PC-3 (cell line): ENCODE measurements at regions of chr21 and their contacts with region 1.

Region 1: GRCh38 chr21:45098867-45099266 is 24.5 kb downstream of the ADARB1 start:
- DNase-seq: peak; percentile 52
- ATAC-seq: peak; percentile 48
- H3K4me3 ChIP-seq: no peak overlapping the region
- H3K27ac ChIP-seq: no peak overlapping the region
- H3K4me1 ChIP-seq: peaks cover 16% of the 10 kb centered on the region
- H3K27me3 ChIP-seq: no peaks in the 10 kb centered on the region
- CTCF ChIP-seq: peak; percentile 80

Region 2: DNA sequence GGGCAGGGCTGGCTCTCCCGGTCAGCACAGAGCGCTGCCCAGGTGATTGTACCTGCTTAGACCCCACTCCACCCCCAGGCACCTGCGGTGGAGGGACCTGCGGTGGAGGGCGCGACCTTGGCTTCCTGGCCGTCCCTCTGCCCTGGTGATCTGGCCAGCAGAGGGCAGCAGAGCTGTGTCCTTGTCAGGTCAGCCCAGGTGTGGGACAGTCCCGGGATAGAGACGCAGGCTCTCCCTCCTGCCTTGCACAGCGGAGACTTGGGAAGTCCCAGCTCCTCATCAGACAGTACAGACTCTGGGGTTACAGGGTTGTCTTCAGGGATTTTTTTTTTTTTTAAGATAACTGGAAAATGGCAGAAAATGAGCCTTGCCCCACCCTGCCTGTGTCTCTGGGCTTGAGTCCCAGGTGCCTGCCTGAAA is 149.1 kb before region 1 on chr21:
- CTCF ChIA-PET with region 1: interaction called, 10 read pairs
- POLR2A ChIA-PET with region 1: no interaction called
- intact Hi-C with region 1: no loop called
- DNase-seq: peak; percentile 81
- ATAC-seq: peak; percentile 84
- H3K4me3 ChIP-seq: no peak overlapping the region
- H3K27ac ChIP-seq: no peak overlapping the region
- H3K4me1 ChIP-seq: peaks cover 13% of the 10 kb centered on the region; the same call in 1 of the 2 replicates
- H3K27me3 ChIP-seq: no peaks in the 10 kb centered on the region
- CTCF ChIP-seq: peak; percentile 96

Region 3: GRCh38 chr21:45074048-45074817 is 24.6 kb before region 1 on chr21 and contains the start of gene ADARB1:
- CTCF ChIA-PET with region 1: interaction called, 11 read pairs
- POLR2A ChIA-PET with region 1: interaction called, 4 read pairs
- intact Hi-C with region 1: loop called (anchors 2 kb)
- DNase-seq: peak; percentile 62
- ATAC-seq: peak; percentile 46
- H3K4me3 ChIP-seq: peak within 1 kb of the TSS; percentile 88
- H3K27ac ChIP-seq: peak within 1 kb of the TSS; percentile 41
- H3K4me1 ChIP-seq: peaks cover 21% of the 10 kb centered on the region; the same call in 1 of the 2 replicates
- H3K27me3 ChIP-seq: no peaks in the 10 kb centered on the region
- CTCF ChIP-seq: no peak
- total RNA-seq, gene ADARB1: 14.1 and 21.0 TPM in 2 replicates

Region 4: DNA sequence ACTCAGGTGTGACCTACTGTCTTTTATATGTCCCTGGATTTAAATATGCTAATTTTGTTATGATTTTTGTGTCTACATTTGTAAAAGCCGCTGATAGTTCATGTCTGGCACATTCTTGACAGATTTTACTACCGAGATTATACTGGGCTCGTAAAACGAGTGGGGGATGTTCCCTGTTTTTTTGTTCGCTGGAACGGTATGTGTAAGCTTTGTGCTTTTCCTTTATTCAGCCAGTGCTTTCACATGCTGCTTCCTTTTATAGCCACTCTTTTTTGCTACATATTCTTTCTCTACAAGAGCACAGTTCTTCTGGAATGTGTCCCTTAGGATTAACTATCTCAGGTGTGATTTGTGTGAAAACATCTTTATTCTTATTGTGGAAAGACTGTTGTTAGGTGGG is 22.1 kb after region 1 on chr21:
- CTCF ChIA-PET with region 1: interaction called, 10 read pairs
- POLR2A ChIA-PET with region 1: interaction called, 5 read pairs
- intact Hi-C with region 1: loop called (anchors 2 kb)
- DNase-seq: peak; percentile 48
- ATAC-seq: peak; percentile 84
- H3K4me3 ChIP-seq: peak overlapping the region; percentile 66
- H3K27ac ChIP-seq: no peak overlapping the region
- H3K4me1 ChIP-seq: peaks cover 16% of the 10 kb centered on the region
- H3K27me3 ChIP-seq: no peaks in the 10 kb centered on the region
- CTCF ChIP-seq: no peak